A673 (cell line): ENCODE measurements at regions of chr22 and their contacts with region 1.

Region 1: DNA sequence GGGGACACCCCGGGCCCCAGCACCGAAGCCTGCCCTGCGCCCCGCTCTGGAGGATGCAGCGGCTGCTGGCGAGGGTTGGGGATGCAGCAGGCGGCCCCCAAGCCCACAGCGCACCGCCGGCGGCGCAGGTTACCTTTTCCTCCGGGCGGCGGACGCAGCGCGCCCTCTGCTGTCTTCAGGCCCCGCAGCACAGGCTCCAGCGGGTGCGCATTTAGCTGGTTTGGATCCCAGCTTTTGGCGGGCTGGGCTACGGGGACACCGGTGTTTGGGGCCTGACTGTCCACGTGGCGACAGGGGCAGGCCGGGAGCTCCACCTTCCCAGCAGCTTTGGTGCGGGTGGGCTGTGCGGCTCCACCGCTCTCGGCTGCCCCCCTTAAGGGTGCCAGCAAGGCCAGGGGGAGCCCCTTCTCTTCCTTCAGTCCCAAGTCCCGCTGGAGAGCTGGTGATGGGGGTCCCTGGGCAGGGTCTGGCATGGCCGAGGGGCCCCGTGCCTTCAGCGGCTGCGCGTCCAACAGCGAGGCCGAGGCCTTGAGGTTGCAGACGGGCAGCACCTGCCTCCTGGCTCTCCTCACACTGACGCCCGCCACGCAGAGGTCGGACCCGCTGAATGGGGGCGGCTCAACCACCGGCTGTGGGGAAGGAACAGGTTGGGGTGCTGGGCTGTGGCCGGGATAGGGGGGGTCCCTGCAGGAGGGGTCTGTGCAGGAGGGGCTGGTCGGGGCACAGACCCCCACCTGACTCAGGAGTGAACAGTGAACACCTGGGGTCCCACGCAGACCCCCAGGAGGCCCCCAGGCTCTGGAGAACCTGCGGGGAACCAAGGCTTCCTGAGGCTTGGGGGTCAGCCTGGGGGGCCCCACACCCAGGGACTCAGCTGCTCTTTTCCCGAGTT is 18.0 kb upstream of the IL17REL start:
- DNase-seq: peak; percentile 88
- H3K4me3 ChIP-seq: no peak overlapping the region
- H3K27ac ChIP-seq: no peak overlapping the region
- H3K4me1 ChIP-seq: peaks cover 4% of the 10 kb centered on the region
- H3K27me3 ChIP-seq: no peaks in the 10 kb centered on the region
- CTCF ChIP-seq: peak; percentile 95

Region 2: DNA sequence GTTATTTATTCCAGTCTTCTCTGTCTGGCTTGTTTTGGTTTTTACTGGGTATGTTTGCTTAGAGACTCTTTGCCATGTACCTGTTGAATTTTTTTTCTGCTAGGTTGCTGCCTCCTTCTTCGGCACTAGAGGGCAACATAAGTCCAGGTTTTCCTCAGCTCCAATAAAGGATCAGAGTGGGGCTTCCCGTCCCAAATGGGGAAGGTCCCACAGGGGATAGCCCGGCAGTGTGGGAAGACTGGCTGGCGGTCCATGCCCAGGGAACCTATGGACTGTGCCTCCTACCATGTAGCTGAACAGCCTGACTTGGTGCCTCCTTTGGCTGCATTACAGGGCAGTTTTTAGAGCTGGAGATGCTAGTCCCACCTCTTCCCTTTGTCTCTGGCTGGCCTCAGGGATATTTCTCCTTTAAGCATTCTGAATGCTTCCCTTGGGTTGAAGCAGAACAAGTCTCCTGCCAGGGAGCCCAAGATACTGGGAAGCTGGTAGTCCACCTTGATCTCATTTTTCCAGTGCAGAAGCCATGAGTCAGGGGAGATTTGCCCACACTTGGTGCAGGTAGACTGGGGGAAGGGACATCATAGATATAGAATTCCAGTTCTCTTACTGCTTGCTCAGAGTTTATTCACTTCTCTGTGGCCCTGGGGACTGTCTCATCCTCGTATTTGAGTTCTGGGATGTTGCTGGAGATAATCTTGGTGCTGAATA is 263.0 kb before region 1 on chr22:
- CTCF ChIA-PET with region 1: interaction called, 13 read pairs
- POLR2A ChIA-PET with region 1: no interaction called
- intact Hi-C with region 1: loop called (anchors 1 kb)
- DNase-seq: peak; percentile 78
- H3K4me3 ChIP-seq: no peak overlapping the region
- H3K27ac ChIP-seq: no peak overlapping the region
- H3K4me1 ChIP-seq: peaks cover 6% of the 10 kb centered on the region
- H3K27me3 ChIP-seq: no peaks in the 10 kb centered on the region
- CTCF ChIP-seq: peak; percentile 87

Region 3: GRCh38 chr22:49992921-49993648 is 37.5 kb before region 1 on chr22:
- CTCF ChIA-PET with region 1: no interaction called
- POLR2A ChIA-PET with region 1: no interaction called
- intact Hi-C with region 1: loop called (anchors 5 kb)
- DNase-seq: peak; percentile 76
- H3K4me3 ChIP-seq: no peak overlapping the region
- H3K27ac ChIP-seq: no peak overlapping the region
- H3K4me1 ChIP-seq: no peaks in the 10 kb centered on the region
- H3K27me3 ChIP-seq: no peaks in the 10 kb centered on the region
- CTCF ChIP-seq: peak; percentile 89

Region 4: GRCh38 chr22:50012716-50013181 is 17.8 kb before region 1 on chr22 and contains the start of gene IL17REL:
- CTCF ChIA-PET with region 1: interaction called, 10 read pairs
- POLR2A ChIA-PET with region 1: no interaction called
- intact Hi-C with region 1: no loop called
- DNase-seq: peak; percentile 37
- H3K4me3 ChIP-seq: no peak within 1 kb of the TSS
- H3K27ac ChIP-seq: no peak within 1 kb of the TSS
- H3K4me1 ChIP-seq: peaks cover 11% of the 10 kb centered on the region
- H3K27me3 ChIP-seq: no peaks in the 10 kb centered on the region
- CTCF ChIP-seq: no peak
- total RNA-seq, gene IL17REL: not detected in 2 replicates

Region 5: DNA sequence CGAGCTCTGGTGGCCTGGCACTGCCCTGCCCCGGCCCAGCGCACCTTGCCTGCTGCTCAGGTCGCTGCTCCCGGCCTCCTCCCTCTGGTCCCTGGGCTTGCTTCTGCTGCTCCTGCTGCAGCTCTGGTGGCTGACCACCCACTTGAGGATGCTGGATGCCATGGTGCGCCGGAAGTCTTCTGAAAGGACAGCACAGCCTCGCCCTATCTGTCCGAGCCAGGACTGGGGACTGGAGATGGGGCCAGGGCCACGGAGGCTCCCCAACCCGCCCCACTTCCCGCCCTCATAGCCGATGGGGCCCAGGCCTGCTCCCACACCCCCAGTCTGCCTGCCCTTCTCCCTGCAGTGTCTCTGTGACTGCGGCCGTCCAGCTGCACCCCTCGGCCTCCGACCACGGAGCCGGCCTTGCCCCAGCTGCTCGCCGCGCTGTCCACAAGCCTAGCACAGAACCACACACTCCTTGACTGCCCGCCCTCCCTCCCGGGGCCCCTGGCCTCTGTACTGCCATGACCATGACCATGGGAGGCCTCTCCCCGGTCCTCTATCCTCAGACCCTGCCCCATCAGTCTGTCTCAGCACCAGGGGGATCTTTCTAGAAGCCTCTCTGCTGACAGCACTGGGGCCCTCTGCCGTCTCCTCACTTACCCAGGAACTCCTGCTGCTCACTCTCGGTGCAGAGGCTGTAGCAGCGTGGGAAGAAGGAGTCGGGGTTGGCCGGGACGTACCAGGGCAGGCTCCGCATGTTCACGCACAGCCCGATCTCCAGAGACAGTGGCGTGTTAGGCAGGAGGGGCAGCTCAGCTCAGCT is 14.9 kb after region 1 on chr22:
- CTCF ChIA-PET with region 1: interaction called, 10 read pairs
- POLR2A ChIA-PET with region 1: no interaction called
- intact Hi-C with region 1: no loop called
- DNase-seq: no peak
- H3K4me3 ChIP-seq: no peak overlapping the region
- H3K27ac ChIP-seq: no peak overlapping the region
- H3K4me1 ChIP-seq: no peaks in the 10 kb centered on the region
- H3K27me3 ChIP-seq: no peaks in the 10 kb centered on the region
- CTCF ChIP-seq: no peak